Dendritic cell treated with granulocyte-macrophage colony-stimulating factor and Interleukin-4, amounts not matched to agents 40 ng/mL and 50 ng/mL, for 4 days (primary cell): ENCODE measurements at regions of chr2 and their contacts with region 1.

Region 1: DNA sequence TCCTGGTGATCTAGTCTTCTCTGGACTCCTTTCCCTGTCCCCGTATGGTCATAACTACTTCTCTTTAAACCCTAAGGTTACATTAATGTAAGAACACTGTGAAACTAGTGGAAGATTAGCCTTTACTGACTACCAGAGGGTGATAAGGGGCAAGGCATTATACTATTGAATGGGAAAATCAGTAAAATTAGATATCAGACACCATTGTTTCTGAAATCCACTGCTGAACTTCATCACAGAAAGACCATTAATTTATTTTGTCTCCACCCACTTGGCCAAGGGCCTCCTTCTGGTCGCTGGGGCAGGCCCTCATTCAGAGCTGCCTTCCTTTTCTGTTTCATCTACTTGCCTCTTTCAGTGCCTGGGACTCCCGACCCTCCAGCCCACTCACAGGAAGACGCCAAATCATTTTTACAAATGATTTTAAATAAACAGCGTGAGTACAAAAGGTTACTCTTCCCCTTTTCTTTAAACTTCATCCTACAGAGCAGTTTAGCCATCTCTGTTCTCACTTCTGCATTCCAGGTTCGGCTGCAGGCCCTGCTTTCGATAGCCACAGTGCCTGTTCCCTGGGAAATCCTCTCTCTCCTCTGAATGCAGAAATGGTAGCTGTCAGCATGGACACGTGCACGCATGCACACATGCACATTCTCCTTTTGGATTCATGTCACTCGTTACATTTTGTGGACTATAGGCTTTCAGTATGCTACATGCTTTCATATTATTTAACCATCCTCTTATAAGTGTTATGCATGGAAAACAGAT is 70.3 kb upstream of the DOCK10 start:
- H3K4me3 Mint-ChIP-seq: peak overlapping the region; percentile 54
- H3K27ac Mint-ChIP-seq: peak overlapping the region; percentile 82
- H3K4me1 Mint-ChIP-seq: peaks cover 53% of the 10 kb centered on the region
- H3K27me3 Mint-ChIP-seq: no peaks in the 10 kb centered on the region

Region 2: GRCh38 chr2:225041851-225042799 is 70.4 kb before region 1 on chr2 and contains the start of gene DOCK10:
- intact Hi-C with region 1: loop called (anchors 5 kb)
- H3K4me3 Mint-ChIP-seq: peak within 1 kb of the TSS; percentile 88
- H3K27ac Mint-ChIP-seq: peak within 1 kb of the TSS; percentile 98
- H3K4me1 Mint-ChIP-seq: peaks cover 50% of the 10 kb centered on the region
- H3K27me3 Mint-ChIP-seq: peaks cover 15% of the 10 kb centered on the region

Region 3: DNA sequence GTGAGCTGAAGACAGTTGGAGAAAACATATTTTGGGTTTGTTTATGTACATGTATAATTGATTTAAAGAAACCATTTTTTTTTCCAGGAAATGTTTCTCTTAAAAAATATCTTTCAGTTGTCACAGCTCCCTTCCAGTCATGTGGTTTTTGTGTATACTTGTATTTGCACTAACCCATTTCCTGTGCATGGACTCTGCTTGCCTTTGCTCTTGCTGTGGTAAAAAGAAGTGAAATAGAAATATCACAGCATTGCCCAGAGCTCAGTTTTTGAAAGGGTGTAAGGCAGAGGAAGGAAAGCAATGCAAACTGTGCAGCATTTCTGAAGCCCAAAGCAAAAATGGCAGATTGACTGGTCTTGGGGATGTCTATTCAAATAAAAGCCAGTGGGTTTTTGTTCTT is 59.8 kb before region 1 on chr2:
- intact Hi-C with region 1: no loop called
- H3K4me3 Mint-ChIP-seq: no peak overlapping the region
- H3K27ac Mint-ChIP-seq: no peak overlapping the region
- H3K4me1 Mint-ChIP-seq: peaks cover 19% of the 10 kb centered on the region
- H3K27me3 Mint-ChIP-seq: peaks cover under 1% of the 10 kb centered on the region

Region 4: GRCh38 chr2:225207043-225207442 is 94.5 kb after region 1 on chr2:
- intact Hi-C with region 1: no loop called
- H3K4me3 Mint-ChIP-seq: no peak overlapping the region
- H3K27ac Mint-ChIP-seq: no peak overlapping the region
- H3K4me1 Mint-ChIP-seq: no peaks in the 10 kb centered on the region
- H3K27me3 Mint-ChIP-seq: peaks cover 2% of the 10 kb centered on the region